ENCODE measurements at regions of chr5 and their contacts with region 1.

Region 1: GRCh38 chr5:115246361-115246991 is 16.2 kb downstream of the PGGT1B start:
- DNase-seq: no peak
- H3K4me3 ChIP-seq: no peak overlapping the region
- H3K27ac ChIP-seq: no peak overlapping the region
- H3K27me3 ChIP-seq: no peaks in the 10 kb centered on the region
- CTCF ChIP-seq: peak; percentile 78

Region 2: DNA sequence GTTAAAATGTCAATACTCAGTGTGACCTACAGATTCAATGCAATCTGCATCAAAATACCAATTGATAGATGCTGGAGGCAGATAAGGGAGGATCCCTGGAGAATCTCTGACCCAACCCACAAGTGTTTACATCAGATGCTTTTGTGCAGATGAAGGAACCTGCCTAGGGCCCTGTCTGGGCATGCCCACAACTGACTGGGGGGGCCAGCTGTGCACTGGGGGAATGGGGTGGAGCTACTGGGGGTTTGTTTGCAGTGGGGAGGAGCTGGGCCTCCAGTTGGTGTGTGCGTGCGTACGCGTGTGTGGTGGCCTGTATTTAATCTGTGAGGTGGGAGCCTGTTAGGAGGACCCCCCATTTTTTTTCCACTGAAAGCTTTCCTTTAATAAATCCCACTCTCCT is 321.7 kb before region 1 on chr5:
- CTCF ChIA-PET with region 1: no interaction called
- POLR2A ChIA-PET with region 1: no interaction called
- DNase-seq: no peak
- H3K4me3 ChIP-seq: no peak overlapping the region
- H3K27ac ChIP-seq: no peak overlapping the region
- H3K27me3 ChIP-seq: no peaks in the 10 kb centered on the region
- CTCF ChIP-seq: no peak

Region 3: DNA sequence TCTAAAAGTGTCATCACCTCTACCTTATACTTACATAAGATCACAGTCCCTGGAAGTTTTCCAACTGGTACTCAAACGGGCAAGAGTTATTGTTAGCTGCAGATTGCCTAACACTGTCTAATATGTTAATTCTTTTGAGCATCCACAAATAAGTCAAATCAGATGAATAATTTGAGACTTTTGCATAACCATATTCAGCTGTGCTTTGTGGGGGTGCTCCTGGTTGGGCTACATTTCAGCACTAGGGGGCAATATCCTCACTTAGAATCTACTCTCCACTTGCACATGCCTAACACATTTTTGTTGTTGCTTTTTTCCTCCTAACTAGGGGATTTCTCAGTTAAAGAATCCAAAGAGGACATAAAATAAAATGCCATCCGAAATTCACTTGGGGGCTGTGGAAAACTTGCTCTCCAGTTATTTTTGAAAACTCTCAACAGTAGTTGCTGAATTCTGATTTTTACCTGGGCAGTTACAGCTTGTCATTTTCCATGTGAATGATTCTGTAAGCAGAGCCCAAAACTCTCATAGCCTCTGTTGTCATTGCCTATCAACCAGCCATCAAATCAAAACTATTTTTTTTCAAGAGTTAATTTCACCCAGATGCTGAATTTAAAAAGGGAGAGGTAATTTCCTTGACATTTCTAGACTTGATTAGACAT is 148.3 kb before region 1 on chr5:
- CTCF ChIA-PET with region 1: interaction called, 112 read pairs
- POLR2A ChIA-PET with region 1: no interaction called
- DNase-seq: peak; percentile 18
- H3K4me3 ChIP-seq: no peak overlapping the region
- H3K27ac ChIP-seq: no peak overlapping the region
- H3K27me3 ChIP-seq: peaks cover 5% of the 10 kb centered on the region
- CTCF ChIP-seq: peak; percentile 85